ENCODE measurements at regions of chr11 and their contacts with region 1.

Region 1: GRCh38 chr11:66638177-66639065 is at the start of gene RBM4:
- DNase-seq: peak; percentile 100
- H3K4me3 Mint-ChIP-seq: peak within 1 kb of the TSS; percentile 97
- H3K27ac Mint-ChIP-seq: peak within 1 kb of the TSS; percentile 98
- H3K4me1 Mint-ChIP-seq: peaks cover 44% of the 10 kb centered on the region
- H3K27me3 Mint-ChIP-seq: no peaks in the 10 kb centered on the region
- CTCF ChIP-seq: no peak
- total RNA-seq, gene RBM4: 171 and 172 TPM in 2 replicates

Region 2: GRCh38 chr11:66480117-66480938 is 158.1 kb before region 1 on chr11 and contains the start of gene DPP3:
- CTCF ChIA-PET with region 1: no interaction called
- POLR2A ChIA-PET with region 1: interaction called, 11 read pairs
- intact Hi-C with region 1: no loop called
- DNase-seq: peak; percentile 98
- H3K4me3 Mint-ChIP-seq: peak within 1 kb of the TSS; percentile 96
- H3K27ac Mint-ChIP-seq: peak within 1 kb of the TSS; percentile 95
- H3K4me1 Mint-ChIP-seq: peaks cover 23% of the 10 kb centered on the region
- H3K27me3 Mint-ChIP-seq: no peaks in the 10 kb centered on the region
- CTCF ChIP-seq: no peak
- total RNA-seq, gene DPP3: 34.4 and 40.9 TPM in 2 replicates

Region 3: DNA sequence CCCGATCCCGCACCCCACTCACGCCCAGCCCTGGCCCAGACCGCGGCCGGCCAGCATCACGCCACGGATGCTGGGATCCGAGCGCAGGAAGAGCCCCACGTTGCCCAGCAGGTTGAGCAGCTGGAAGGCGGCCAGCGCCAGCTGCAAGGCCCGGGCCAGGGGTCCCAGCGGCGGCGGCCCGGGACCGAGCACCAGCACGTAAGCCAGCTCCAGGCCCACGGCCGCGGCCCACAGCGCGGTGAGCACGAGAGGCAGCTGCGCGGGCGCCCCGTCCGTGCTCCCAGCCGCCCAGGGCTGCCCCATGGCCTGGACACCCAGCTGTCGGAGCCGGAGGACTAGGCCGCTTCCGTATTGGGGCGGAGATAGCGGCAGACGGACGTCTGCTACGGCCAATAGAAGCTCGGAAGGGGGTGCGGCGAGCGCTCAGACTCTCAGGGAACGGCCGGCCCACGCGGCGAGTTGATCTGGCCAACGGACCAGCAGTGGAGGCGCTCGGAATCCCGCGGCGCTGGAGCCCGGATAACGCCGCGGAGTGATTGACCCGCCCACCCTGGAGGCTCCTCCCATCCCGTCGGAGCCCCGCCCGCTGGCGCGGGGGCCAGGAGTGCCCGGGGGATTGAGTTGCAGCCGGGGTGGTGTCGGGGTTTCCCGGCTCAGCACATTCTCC is 92.6 kb before region 1 on chr11 and contains the start of gene ZDHHC24:
- CTCF ChIA-PET with region 1: no interaction called
- POLR2A ChIA-PET with region 1: interaction called, 33 read pairs
- intact Hi-C with region 1: no loop called
- DNase-seq: peak; percentile 98
- H3K4me3 Mint-ChIP-seq: peak within 1 kb of the TSS; percentile 78
- H3K27ac Mint-ChIP-seq: peak within 1 kb of the TSS; percentile 92
- H3K4me1 Mint-ChIP-seq: peaks cover 41% of the 10 kb centered on the region
- H3K27me3 Mint-ChIP-seq: peaks cover 15% of the 10 kb centered on the region
- CTCF ChIP-seq: no peak
- total RNA-seq, gene ZDHHC24: 11.1 and 12.4 TPM in 2 replicates

Region 4: GRCh38 chr11:66556086-66556485 is 82.3 kb before region 1 on chr11:
- CTCF ChIA-PET with region 1: no interaction called
- POLR2A ChIA-PET with region 1: no interaction called
- intact Hi-C with region 1: no loop called
- DNase-seq: no peak
- H3K4me3 Mint-ChIP-seq: no peak overlapping the region
- H3K27ac Mint-ChIP-seq: no peak overlapping the region
- H3K4me1 Mint-ChIP-seq: no peaks in the 10 kb centered on the region
- H3K27me3 Mint-ChIP-seq: no peaks in the 10 kb centered on the region
- CTCF ChIP-seq: no peak

Region 5: DNA sequence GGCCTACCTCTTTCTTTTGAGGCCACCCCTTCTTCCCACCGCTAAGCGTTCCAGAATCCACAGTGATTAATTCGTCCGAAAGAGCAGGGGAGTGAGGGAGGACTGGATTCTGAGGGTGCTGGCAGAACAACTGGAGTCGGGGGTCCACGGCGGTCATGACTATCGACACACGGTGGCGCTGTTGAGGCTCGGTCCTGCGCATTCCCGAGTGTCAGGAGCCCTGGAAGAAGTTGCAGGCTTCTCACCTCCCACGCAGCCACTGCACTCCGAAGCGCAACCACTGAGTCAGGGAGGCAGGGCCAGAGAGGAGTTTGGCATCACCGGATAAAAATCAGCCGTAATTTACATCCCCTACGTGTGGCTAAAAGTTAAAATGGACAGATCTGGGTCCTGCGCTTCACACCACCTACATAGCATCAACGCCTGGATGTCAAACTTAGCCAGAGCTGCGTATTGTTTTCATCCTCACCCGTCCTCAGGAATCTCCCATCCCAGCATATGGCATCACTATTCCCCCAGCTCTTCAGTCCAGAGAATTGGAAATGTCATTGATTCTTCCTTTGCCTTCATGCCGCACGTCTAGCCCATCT is 59.3 kb before region 1 on chr11:
- CTCF ChIA-PET with region 1: interaction called, 3 read pairs
- POLR2A ChIA-PET with region 1: interaction called, 3 read pairs
- intact Hi-C with region 1: loop called (anchors 5 kb)
- DNase-seq: peak; percentile 73
- H3K4me3 Mint-ChIP-seq: no peak overlapping the region
- H3K27ac Mint-ChIP-seq: no peak overlapping the region
- H3K4me1 Mint-ChIP-seq: peaks cover 14% of the 10 kb centered on the region
- H3K27me3 Mint-ChIP-seq: peaks cover 28% of the 10 kb centered on the region
- CTCF ChIP-seq: peak; percentile 79

Region 6: GRCh38 chr11:66616379-66617154 is 21.9 kb before region 1 on chr11 and contains the start of gene RBM14:
- CTCF ChIA-PET with region 1: interaction called, 3 read pairs
- POLR2A ChIA-PET with region 1: interaction called, 420 read pairs
- intact Hi-C with region 1: no loop called
- DNase-seq: peak; percentile 99
- H3K4me3 Mint-ChIP-seq: peak within 1 kb of the TSS; percentile 86
- H3K27ac Mint-ChIP-seq: peak within 1 kb of the TSS; percentile 96
- H3K4me1 Mint-ChIP-seq: peaks cover 20% of the 10 kb centered on the region
- H3K27me3 Mint-ChIP-seq: no peaks in the 10 kb centered on the region
- CTCF ChIP-seq: no peak
- total RNA-seq, gene RBM14: 78.1 and 88.3 TPM in 2 replicates

Region 7: GRCh38 chr11:66677599-66678375 is 39.4 kb after region 1 on chr11 and contains the start of gene RBM4B:
- CTCF ChIA-PET with region 1: interaction called, 8 read pairs
- POLR2A ChIA-PET with region 1: interaction called, 34 read pairs
- intact Hi-C with region 1: no loop called
- DNase-seq: peak; percentile 91
- H3K4me3 Mint-ChIP-seq: peak within 1 kb of the TSS; percentile 89
- H3K27ac Mint-ChIP-seq: peak within 1 kb of the TSS; percentile 98
- H3K4me1 Mint-ChIP-seq: peaks cover 18% of the 10 kb centered on the region
- H3K27me3 Mint-ChIP-seq: no peaks in the 10 kb centered on the region
- CTCF ChIP-seq: no peak
- total RNA-seq, gene RBM4B: 9.5 and 13.5 TPM in 2 replicates

Region 8: GRCh38 chr11:66720223-66720947 is 82.0 kb after region 1 on chr11:
- CTCF ChIA-PET with region 1: no interaction called
- POLR2A ChIA-PET with region 1: no interaction called
- intact Hi-C with region 1: no loop called
- DNase-seq: peak; percentile 93
- H3K4me3 Mint-ChIP-seq: peak overlapping the region; percentile 60
- H3K27ac Mint-ChIP-seq: peak overlapping the region; percentile 71
- H3K4me1 Mint-ChIP-seq: peaks cover 9% of the 10 kb centered on the region
- H3K27me3 Mint-ChIP-seq: no peaks in the 10 kb centered on the region
- CTCF ChIP-seq: no peak

Region 9: GRCh38 chr11:66734215-66734614 is 95.8 kb after region 1 on chr11:
- CTCF ChIA-PET with region 1: no interaction called
- POLR2A ChIA-PET with region 1: no interaction called
- intact Hi-C with region 1: no loop called
- DNase-seq: no peak
- H3K4me3 Mint-ChIP-seq: no peak overlapping the region
- H3K27ac Mint-ChIP-seq: no peak overlapping the region
- H3K4me1 Mint-ChIP-seq: no peaks in the 10 kb centered on the region
- H3K27me3 Mint-ChIP-seq: no peaks in the 10 kb centered on the region
- CTCF ChIP-seq: no peak

Region 10: GRCh38 chr11:66800720-66801428 is 162.5 kb after region 1 on chr11:
- CTCF ChIA-PET with region 1: no interaction called
- POLR2A ChIA-PET with region 1: no interaction called
- intact Hi-C with region 1: no loop called
- DNase-seq: no peak
- H3K4me3 Mint-ChIP-seq: no peak overlapping the region
- H3K27ac Mint-ChIP-seq: no peak overlapping the region
- H3K4me1 Mint-ChIP-seq: no peaks in the 10 kb centered on the region
- H3K27me3 Mint-ChIP-seq: no peaks in the 10 kb centered on the region
- CTCF ChIP-seq: no peak

Measured in MCF 10A (cell line).